ENCODE measurements at regions of chr6 and their contacts with region 1.

Region 1: DNA sequence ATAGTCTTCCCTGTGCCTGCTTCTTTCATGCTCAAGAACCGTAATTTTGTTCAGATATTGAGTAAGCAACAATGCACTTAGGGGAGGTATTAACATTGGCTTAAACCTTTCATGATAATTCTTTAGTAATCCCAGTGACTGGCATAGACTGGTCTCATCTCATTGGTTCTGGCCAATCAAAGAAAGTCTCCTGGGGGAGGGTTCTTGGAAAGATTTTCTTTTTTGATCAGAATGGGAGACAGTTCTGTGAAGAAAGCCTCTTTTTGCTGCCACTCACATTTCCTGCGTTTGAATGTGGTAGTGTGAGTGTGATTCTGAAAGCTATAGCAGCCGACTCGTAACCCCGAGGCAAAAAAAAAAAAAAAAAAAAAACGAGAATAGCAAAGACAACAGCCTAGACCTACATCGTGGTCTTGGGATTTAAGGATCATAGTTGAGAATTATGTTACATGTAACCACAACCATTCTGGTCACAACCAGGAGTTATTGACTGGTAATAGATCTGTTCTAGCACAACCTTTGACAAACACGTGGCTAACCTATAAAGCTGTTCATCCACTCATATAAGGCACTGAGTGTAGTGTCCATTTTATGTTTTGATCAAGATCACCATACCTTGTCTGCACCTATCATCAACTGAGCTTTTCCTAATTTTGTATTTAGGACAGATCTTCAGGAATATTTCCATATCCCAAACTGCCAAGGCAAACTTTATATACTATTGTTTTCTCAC is 15.1 kb upstream of the TMEM217 start:
- DNase-seq: peak; percentile 15
- H3K4me3 ChIP-seq: no peak overlapping the region
- H3K27ac ChIP-seq: no peak overlapping the region
- H3K4me1 ChIP-seq: peaks cover 16% of the 10 kb centered on the region
- H3K27me3 ChIP-seq: no peaks in the 10 kb centered on the region
- CTCF ChIP-seq: no peak

Region 2: DNA sequence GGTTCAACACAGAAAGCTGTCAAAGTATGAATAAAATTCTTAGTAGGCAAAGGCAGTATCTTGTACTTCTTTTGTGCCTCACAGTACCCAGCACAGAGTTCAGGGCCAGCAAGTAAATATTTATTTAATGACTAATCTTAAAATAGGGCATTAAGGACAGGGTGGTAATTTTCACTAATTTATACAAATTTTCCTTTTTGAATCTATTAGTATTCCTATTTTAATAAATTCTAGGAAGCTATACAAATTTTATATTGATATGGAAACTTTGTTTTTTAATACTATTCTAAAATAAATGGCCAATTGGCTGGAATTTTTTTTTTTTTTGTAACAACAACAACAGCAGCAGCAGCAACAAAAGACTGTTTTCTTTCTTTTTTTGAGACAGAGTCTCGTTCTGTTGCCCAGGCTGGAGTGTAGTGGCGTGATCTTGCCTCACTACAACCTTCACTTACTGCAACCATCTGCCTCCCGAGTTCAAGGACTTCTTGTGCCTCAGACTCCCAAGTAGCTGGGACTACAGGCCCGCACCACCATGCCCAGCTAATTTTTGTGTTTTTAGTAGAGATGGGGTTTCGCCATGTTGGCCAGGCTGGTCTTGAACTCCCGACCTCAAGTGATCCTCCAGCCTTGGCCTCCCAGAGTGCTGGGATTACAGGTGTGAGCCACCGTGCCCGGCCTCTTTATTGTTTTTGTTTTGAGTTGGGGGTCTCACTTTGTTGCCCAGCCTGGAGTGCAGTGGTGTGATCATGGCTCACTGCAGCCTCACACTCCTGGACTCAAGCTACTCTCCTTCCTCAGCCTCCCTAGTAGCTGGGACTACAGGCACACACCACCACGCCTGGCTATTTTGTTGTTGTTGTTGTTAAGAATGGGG is 1669.4 kb before region 1 on chr6:
- CTCF ChIA-PET with region 1: no interaction called
- POLR2A ChIA-PET with region 1: interaction called, 10 read pairs
- intact Hi-C with region 1: no loop called
- DNase-seq: no peak
- H3K4me3 ChIP-seq: no peak overlapping the region
- H3K27ac ChIP-seq: no peak overlapping the region
- H3K4me1 ChIP-seq: peaks cover 33% of the 10 kb centered on the region
- H3K27me3 ChIP-seq: no peaks in the 10 kb centered on the region
- CTCF ChIP-seq: no peak

Region 3: DNA sequence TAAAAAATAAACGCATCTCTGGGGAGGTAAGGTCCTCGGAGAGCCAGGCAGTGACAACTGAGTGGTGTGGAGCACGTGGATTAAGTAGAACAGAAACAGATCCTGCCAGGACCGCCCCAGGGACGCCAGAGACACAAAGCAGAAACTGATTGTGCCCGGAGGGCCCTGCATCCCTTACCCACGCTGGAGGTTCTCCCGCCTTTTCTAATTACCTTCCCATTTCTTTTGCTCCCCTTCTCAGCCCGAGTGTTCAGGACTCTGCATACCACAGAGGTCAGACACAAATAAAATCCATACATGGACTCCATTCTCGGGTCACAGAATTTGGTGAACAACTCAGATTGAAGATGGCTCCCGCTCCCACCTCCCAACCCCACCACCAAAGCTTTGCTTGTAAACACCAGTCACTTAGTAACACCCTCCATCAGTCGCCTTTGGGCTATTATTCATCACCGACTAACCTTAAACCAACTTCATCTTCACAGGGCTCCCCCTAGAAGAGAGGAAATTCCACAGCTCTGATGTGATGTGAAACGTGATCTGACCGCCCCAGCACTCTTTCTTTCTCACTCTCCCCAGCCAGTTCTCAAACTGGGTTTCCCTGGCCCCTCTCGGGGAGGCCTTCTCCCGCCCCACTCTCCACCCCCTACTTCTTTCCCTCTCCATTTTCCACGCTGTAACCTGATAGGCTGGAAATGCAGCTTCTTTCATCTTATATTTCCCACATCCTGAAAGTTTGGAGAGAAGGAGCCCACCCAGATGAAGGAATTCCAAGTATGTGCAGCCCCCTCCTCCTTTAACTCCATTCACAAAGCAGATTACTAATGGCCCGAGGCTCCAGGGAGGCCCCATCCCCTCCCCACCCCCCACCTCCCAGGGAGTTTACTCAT is 135.6 kb before region 1 on chr6:
- CTCF ChIA-PET with region 1: no interaction called
- POLR2A ChIA-PET with region 1: no interaction called
- intact Hi-C with region 1: no loop called
- DNase-seq: peak; percentile 89
- H3K4me3 ChIP-seq: peak overlapping the region; percentile 14
- H3K27ac ChIP-seq: peak overlapping the region; percentile 72
- H3K4me1 ChIP-seq: peaks cover 39% of the 10 kb centered on the region
- H3K27me3 ChIP-seq: no peaks in the 10 kb centered on the region
- CTCF ChIP-seq: no peak